Activated CD4-positive, alpha-beta T cell treated with anti-CD3 and anti-CD28 coated beads for 36 hours (primary cell): ENCODE measurements at regions of chr16 and their contacts with region 1.

Region 1: GRCh38 chr16:15822957-15823356 is 33.9 kb downstream of the MYH11 start:
- DNase-seq: no peak
- ATAC-seq: no peak
- H3K4me3 Mint-ChIP-seq: no peak overlapping the region
- H3K27ac Mint-ChIP-seq: no peak overlapping the region
- H3K4me1 Mint-ChIP-seq: no peaks in the 10 kb centered on the region
- H3K27me3 Mint-ChIP-seq: no peaks in the 10 kb centered on the region

Region 2: DNA sequence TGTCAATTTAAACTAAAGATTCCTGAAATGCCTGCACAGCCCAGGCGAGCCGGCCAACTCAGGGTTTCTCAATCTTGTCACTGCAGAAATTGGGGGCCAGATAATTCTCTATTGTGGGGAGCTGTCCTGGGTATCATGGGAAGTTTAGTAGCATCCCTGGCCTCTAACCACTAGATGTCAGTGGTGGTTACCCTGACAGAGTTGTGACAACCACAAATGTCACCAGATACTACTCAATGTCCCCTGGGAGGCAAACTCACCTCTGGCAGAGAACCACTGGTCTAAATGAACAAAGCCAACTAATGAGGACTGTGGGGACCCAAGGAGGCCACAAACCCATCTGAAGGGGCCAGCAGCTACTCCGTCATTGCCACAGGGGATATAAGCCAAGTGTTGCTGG is 57.1 kb before region 1 on chr16:
- CTCF ChIA-PET with region 1: interaction called, 4 read pairs
- POLR2A ChIA-PET with region 1: no interaction called
- intact Hi-C with region 1: loop called (anchors 1 to 5 kb)
- DNase-seq: peak; percentile 44
- ATAC-seq: peak; percentile 90
- H3K4me3 Mint-ChIP-seq: no peak overlapping the region
- H3K27ac Mint-ChIP-seq: no peak overlapping the region
- H3K4me1 Mint-ChIP-seq: no peaks in the 10 kb centered on the region
- H3K27me3 Mint-ChIP-seq: peaks cover 7% of the 10 kb centered on the region

Region 3: DNA sequence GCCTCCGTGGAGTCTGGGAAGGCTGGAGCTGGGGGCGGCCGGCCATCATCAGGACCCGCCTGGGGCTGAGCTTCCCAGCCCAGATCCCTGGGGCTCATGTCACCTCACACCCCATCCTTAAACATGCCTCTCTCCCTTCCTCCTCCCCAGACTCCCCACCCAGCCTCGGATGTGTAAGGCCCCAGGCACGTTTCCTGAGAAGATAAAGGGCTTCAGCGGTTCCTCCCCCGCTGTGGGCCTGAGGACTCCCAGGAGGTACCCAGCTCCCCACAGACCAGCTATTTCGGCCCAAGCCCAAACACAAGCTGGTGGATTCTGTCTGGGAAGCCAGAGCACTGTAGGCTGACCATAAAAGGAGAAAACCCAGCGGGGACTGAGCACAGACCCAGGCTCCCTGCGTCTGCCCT is 15.4 kb before region 1 on chr16:
- CTCF ChIA-PET with region 1: interaction called, 13 read pairs
- POLR2A ChIA-PET with region 1: no interaction called
- intact Hi-C with region 1: no loop called
- DNase-seq: no peak
- ATAC-seq: no peak
- H3K4me3 Mint-ChIP-seq: no peak overlapping the region
- H3K27ac Mint-ChIP-seq: no peak overlapping the region
- H3K4me1 Mint-ChIP-seq: no peaks in the 10 kb centered on the region
- H3K27me3 Mint-ChIP-seq: peaks cover 4% of the 10 kb centered on the region